Activated naive CD4-positive, alpha-beta T cell treated with anti-CD3 and anti-CD28 coated beads for 36 hours (primary cell): ENCODE measurements at regions of chr17 and their contacts with region 1.

Region 1: DNA sequence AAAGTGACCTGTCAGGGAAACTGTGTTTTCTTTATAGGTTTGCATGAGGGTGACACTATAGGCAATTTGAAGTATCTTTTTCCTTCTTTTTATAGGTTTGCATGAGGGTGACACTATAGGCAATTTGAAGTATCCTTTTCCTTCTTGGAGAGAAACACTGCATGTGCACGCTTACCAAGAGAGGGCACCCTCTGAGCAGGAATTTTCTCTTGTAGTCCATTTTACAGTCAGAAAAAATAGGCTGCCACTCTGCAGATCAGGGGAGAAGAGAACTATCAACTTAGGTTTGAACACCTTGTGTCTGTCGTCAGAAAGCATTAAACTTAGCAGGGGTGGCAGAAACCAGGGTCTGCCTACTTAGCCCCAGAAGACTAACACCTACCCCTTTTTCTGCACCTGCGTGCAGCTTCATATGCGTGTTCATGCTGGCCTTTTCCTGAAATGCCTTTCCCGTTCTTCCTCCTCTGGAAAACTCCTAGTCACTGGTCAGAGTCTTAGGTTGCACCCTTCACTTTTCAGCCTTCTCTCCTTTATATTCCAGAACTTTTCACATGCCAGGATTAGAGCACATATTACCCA is 16.4 kb upstream of the SMIM36 start:
- DNase-seq: peak; percentile 56
- H3K4me3 Mint-ChIP-seq: no peak overlapping the region
- H3K27ac Mint-ChIP-seq: no peak overlapping the region
- H3K4me1 Mint-ChIP-seq: no peaks in the 10 kb centered on the region
- H3K27me3 Mint-ChIP-seq: peaks cover 3% of the 10 kb centered on the region

Region 2: GRCh38 chr17:55410722-55411462 is 116.7 kb before region 1 on chr17:
- CTCF ChIA-PET with region 1: no interaction called
- intact Hi-C with region 1: no loop called
- DNase-seq: no peak
- H3K4me3 Mint-ChIP-seq: no peak overlapping the region
- H3K27ac Mint-ChIP-seq: no peak overlapping the region
- H3K4me1 Mint-ChIP-seq: peaks cover 3% of the 10 kb centered on the region
- H3K27me3 Mint-ChIP-seq: no peaks in the 10 kb centered on the region

Region 3: DNA sequence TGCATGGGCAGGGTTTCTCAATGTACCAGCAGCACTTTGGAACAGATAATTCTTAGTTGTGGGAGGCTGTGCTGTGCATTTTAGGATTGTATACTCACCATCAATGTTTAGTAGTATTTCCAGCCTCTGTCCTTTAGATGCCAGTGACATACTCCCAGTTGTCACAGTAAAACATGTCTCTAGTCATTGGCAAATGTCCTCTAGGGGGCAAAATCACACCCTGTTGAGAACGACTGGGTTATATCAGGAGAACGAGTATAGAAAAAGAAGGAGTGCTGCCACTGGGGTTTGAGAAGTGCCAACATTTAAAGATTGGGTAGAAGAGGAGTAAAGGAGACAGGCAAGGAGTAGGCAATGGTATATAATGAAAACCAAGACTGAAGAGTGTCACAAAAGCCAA is 21.5 kb after region 1 on chr17:
- CTCF ChIA-PET with region 1: interaction called, 11 read pairs
- intact Hi-C with region 1: loop called (anchors 1 kb)
- DNase-seq: peak; percentile 39
- H3K4me3 Mint-ChIP-seq: no peak overlapping the region
- H3K27ac Mint-ChIP-seq: no peak overlapping the region
- H3K4me1 Mint-ChIP-seq: peaks cover 11% of the 10 kb centered on the region
- H3K27me3 Mint-ChIP-seq: peaks cover 3% of the 10 kb centered on the region

Region 4: DNA sequence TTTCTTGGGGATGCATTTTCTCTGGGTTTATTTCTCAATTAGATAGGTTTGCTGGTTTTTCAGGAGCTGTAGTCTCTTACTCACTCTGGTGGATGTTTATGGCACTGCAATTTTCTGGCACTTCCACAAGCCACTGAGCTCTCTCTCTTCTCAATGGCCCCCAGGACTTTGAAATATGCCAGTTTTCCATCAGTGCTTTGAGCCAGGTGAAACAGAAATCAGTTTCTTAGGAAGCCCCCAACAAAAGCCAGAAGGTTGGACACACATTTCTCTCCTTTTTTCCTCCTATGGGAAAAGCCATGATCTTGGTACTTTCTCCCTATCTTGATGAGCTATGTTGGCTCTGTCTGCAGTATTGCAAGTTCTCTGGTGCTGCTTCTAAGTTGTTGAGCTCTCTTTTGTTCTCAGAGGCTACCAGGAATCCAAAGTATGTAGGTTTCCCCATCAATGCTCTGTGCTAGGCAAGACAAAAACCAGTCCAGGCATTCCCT is 74.3 kb after region 1 on chr17:
- CTCF ChIA-PET with region 1: interaction called, 155 read pairs
- intact Hi-C with region 1: loop called (anchors 1 kb)
- DNase-seq: peak; percentile 54
- H3K4me3 Mint-ChIP-seq: no peak overlapping the region
- H3K27ac Mint-ChIP-seq: no peak overlapping the region
- H3K4me1 Mint-ChIP-seq: no peaks in the 10 kb centered on the region
- H3K27me3 Mint-ChIP-seq: peaks cover 3% of the 10 kb centered on the region

Region 5: GRCh38 chr17:55699181-55699860 is 171.7 kb after region 1 on chr17:
- CTCF ChIA-PET with region 1: no interaction called
- intact Hi-C with region 1: no loop called
- DNase-seq: no peak
- H3K4me3 Mint-ChIP-seq: no peak overlapping the region
- H3K27ac Mint-ChIP-seq: no peak overlapping the region
- H3K4me1 Mint-ChIP-seq: no peaks in the 10 kb centered on the region
- H3K27me3 Mint-ChIP-seq: peaks cover 42% of the 10 kb centered on the region

Region 6: GRCh38 chr17:55717898-55718735 is 190.5 kb after region 1 on chr17:
- CTCF ChIA-PET with region 1: interaction called, 35 read pairs
- intact Hi-C with region 1: loop called (anchors 1 kb)
- DNase-seq: peak; percentile 84
- H3K4me3 Mint-ChIP-seq: no peak overlapping the region
- H3K27ac Mint-ChIP-seq: no peak overlapping the region
- H3K4me1 Mint-ChIP-seq: peaks cover 2% of the 10 kb centered on the region
- H3K27me3 Mint-ChIP-seq: peaks cover 15% of the 10 kb centered on the region

Region 7: DNA sequence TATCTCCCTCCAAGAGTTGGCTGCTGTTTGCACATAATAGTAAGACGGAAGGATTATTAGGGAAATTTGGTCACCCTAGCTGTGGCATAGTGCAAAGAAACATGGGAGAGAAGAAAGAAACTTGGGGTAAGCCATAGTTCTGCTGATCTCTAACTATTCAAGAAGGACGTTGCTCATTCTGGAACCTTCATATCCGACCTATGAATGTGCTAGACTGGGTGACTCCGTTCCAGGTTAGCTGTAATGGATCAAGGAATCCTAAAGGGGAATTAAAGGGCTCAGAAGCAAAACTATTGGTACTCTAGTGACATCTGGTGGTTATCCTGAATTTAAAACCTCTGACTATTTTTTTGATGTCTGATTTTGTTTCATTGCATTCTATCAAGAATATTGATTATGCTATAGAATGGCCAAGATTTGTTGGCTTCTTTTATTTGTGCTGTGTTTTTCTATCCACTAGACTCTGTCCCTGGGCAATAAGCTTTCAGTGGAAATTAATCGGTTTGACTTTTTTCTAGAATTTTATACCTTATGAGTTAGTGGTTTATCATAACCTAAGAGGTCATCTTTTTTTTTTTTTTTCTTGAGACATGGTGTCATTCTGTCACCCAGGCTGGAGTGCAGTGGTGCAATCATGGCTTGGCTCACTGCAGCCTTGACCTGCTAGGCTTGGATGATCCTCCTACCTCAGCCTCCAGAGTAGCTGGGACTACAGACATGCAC is 242.7 kb after region 1 on chr17:
- CTCF ChIA-PET with region 1: interaction called, 32 read pairs
- intact Hi-C with region 1: loop called (anchors 1 kb)
- DNase-seq: no peak
- H3K4me3 Mint-ChIP-seq: no peak overlapping the region
- H3K27ac Mint-ChIP-seq: no peak overlapping the region
- H3K4me1 Mint-ChIP-seq: no peaks in the 10 kb centered on the region
- H3K27me3 Mint-ChIP-seq: no peaks in the 10 kb centered on the region

Region 8: DNA sequence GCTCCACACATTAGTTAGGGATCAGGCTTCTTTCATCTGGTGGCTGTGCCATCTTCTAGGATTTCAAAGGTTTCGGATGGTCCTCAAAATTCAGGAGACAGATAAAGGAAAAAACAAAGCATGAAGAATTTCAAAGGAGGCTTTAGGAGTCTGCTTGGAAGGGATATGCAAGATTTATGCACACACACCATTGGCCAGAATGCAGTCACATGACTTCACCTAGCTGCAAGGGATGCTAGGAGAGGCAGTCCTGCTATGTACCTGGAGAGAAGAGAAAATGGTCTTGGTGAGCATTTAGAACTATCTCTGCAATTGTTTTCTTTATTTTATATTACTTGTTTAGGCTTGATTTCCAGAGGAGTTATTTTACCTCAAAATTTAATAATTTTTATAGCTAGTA is 397.8 kb after region 1 on chr17:
- CTCF ChIA-PET with region 1: no interaction called
- intact Hi-C with region 1: no loop called
- DNase-seq: no peak
- H3K4me3 Mint-ChIP-seq: no peak overlapping the region
- H3K27ac Mint-ChIP-seq: no peak overlapping the region
- H3K4me1 Mint-ChIP-seq: peaks cover 7% of the 10 kb centered on the region
- H3K27me3 Mint-ChIP-seq: peaks cover 3% of the 10 kb centered on the region

Region 9: GRCh38 chr17:56319517-56319916 is 791.9 kb after region 1 on chr17:
- CTCF ChIA-PET with region 1: no interaction called
- intact Hi-C with region 1: loop called (anchors 5 kb)
- DNase-seq: no peak
- H3K4me3 Mint-ChIP-seq: no peak overlapping the region
- H3K27ac Mint-ChIP-seq: no peak overlapping the region
- H3K4me1 Mint-ChIP-seq: no peaks in the 10 kb centered on the region
- H3K27me3 Mint-ChIP-seq: peaks cover 4% of the 10 kb centered on the region